Breast epithelium (tissue), 4 donors: ENCODE measurements at regions of chr16 and their contacts with region 1.

Region 1: DNA sequence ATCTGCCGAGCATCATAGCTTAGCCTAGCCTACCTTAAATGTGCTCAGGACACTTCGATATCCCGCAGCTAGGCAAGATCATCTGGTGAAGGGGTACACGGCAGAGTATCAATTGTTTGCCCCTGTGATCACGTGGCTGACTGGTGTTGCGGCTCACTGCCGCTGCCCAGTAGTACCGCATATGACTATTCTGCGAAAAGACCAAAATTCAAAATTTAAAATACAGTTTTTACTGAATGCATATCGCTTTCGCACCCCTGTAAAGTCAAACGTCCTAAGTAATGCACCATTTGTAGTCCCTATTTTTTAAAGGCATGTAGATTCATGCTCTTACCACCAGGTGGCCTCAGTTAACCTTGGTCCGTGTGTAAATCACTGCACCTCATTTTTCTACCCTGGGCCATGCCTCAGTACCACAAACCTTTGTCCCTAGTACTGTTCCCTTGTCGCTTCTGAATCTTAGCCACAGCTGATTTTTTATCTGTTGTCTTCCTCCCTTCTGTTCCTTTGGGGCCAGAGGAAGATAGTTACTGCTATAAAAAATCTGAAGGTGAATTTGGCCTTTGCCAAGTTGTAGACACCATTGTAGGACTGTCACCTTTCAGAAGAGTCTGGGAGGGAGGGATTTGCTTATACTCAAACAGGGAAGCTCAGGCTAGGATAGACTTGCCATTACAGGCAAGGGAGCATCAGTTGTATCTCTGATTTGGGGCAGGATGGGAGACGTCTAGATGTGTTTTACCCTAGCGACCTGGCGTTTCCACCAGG is 34.4 kb downstream of the WWP2 start:
- DNase-seq: no peak
- H3K4me3 ChIP-seq: peak overlapping the region in 1 of 3 donors; percentile 13
- H3K27ac ChIP-seq: no peak overlapping the region
- H3K4me1 ChIP-seq: no peaks in the 10 kb centered on the region
- H3K27me3 ChIP-seq: no peaks in the 10 kb centered on the region
- CTCF ChIP-seq: peak; percentile 85 to 90 (median 88)
- POLR2A ChIP-seq: no peak

Region 2: GRCh38 chr16:68085259-68086071 is 1711.1 kb before region 1 on chr16 and contains the start of gene NFATC3:
- intact Hi-C with region 1: no loop called
- DNase-seq: peak; percentile 98 to 99
- H3K4me3 ChIP-seq: peak within 1 kb of the TSS; percentile 75 to 95 (median 91)
- H3K27ac ChIP-seq: peak within 1 kb of the TSS; percentile 94 to 99
- H3K4me1 ChIP-seq: peaks cover 4 to 12% of the 10 kb centered on the region in 2 donors
- H3K27me3 ChIP-seq: no peaks in the 10 kb centered on the region
- CTCF ChIP-seq: no peak
- POLR2A ChIP-seq: no peak
- total RNA-seq, gene NFATC3: 52.0 to 64.2 (median 60.6) TPM

Region 3: GRCh38 chr16:69820926-69821541 is 24.5 kb after region 1 on chr16:
- intact Hi-C with region 1: no loop called
- DNase-seq: no peak
- H3K4me3 ChIP-seq: peak overlapping the region in 2 of 3 donors; percentile 24 to 29
- H3K27ac ChIP-seq: peak overlapping the region; percentile 20 to 52
- H3K4me1 ChIP-seq: no peaks in the 10 kb centered on the region
- H3K27me3 ChIP-seq: no peaks in the 10 kb centered on the region
- CTCF ChIP-seq: no peak
- POLR2A ChIP-seq: no peak

Region 4: GRCh38 chr16:69861292-69862030 is 64.9 kb after region 1 on chr16:
- intact Hi-C with region 1: loop called (anchors 10 kb)
- DNase-seq: peak in 1 of 2 donors; percentile 34
- H3K4me3 ChIP-seq: peak overlapping the region in 1 of 3 donors; percentile 21
- H3K27ac ChIP-seq: peak overlapping the region; percentile 67 to 78
- H3K4me1 ChIP-seq: no peaks in the 10 kb centered on the region
- H3K27me3 ChIP-seq: no peaks in the 10 kb centered on the region
- CTCF ChIP-seq: no peak
- POLR2A ChIP-seq: no peak